Natural killer cell (primary cell): ENCODE measurements at regions of chr2 and their contacts with region 1.

Region 1: GRCh38 chr2:12456293-12457151 is 260.2 kb upstream of the TRIB2 start:
- DNase-seq: peak; percentile 68 to 70
- ATAC-seq: peak; percentile 89 to 94 (median 93)
- H3K4me3 ChIP-seq: peak overlapping the region; percentile 35
- H3K4me3 Mint-ChIP-seq: peak overlapping the region; percentile 91
- H3K27ac ChIP-seq: peak overlapping the region; percentile 85
- H3K27ac Mint-ChIP-seq: peak overlapping the region; percentile 93 to 96
- H3K4me1 ChIP-seq: peaks cover 13% of the 10 kb centered on the region
- H3K4me1 Mint-ChIP-seq: peaks cover 36 to 39% of the 10 kb centered on the region in 2 donors
- H3K27me3 ChIP-seq: no peaks in the 10 kb centered on the region
- H3K27me3 Mint-ChIP-seq: no peaks in the 10 kb centered on the region
- CTCF ChIP-seq: no peak

Region 2: GRCh38 chr2:12430407-12431133 is 26.0 kb before region 1 on chr2:
- intact Hi-C with region 1: no loop called
- DNase-seq: peak in 1 of 2 donors; percentile 47
- ATAC-seq: peak; percentile 81 to 92 (median 83)
- H3K4me3 ChIP-seq: peak overlapping the region; percentile 27
- H3K4me3 Mint-ChIP-seq: peak overlapping the region; percentile 89
- H3K27ac ChIP-seq: peak overlapping the region; percentile 52
- H3K27ac Mint-ChIP-seq: peak overlapping the region; percentile 40 to 55
- H3K4me1 ChIP-seq: peaks cover 8% of the 10 kb centered on the region
- H3K4me1 Mint-ChIP-seq: peaks cover 12 to 17% of the 10 kb centered on the region in 2 donors
- H3K27me3 ChIP-seq: no peaks in the 10 kb centered on the region
- H3K27me3 Mint-ChIP-seq: no peaks in the 10 kb centered on the region
- CTCF ChIP-seq: no peak

Region 3: GRCh38 chr2:12709207-12709522 is 252.6 kb after region 1 on chr2:
- intact Hi-C with region 1: loop called (anchors 2 kb)
- DNase-seq: peak in 1 of 2 donors; percentile 79
- ATAC-seq: peak; percentile 91 to 95 (median 93)
- H3K4me3 ChIP-seq: no peak overlapping the region
- H3K4me3 Mint-ChIP-seq: peak overlapping the region; percentile 77
- H3K27ac ChIP-seq: peak overlapping the region; percentile 86
- H3K27ac Mint-ChIP-seq: peak overlapping the region; percentile 93 to 94
- H3K4me1 ChIP-seq: peaks cover 35% of the 10 kb centered on the region
- H3K4me1 Mint-ChIP-seq: peaks cover 64 to 70% of the 10 kb centered on the region in 2 donors
- H3K27me3 ChIP-seq: no peaks in the 10 kb centered on the region
- H3K27me3 Mint-ChIP-seq: no peaks in the 10 kb centered on the region
- CTCF ChIP-seq: no peak